ENCODE measurements at regions of chr16 and their contacts with region 1.

Region 1: DNA sequence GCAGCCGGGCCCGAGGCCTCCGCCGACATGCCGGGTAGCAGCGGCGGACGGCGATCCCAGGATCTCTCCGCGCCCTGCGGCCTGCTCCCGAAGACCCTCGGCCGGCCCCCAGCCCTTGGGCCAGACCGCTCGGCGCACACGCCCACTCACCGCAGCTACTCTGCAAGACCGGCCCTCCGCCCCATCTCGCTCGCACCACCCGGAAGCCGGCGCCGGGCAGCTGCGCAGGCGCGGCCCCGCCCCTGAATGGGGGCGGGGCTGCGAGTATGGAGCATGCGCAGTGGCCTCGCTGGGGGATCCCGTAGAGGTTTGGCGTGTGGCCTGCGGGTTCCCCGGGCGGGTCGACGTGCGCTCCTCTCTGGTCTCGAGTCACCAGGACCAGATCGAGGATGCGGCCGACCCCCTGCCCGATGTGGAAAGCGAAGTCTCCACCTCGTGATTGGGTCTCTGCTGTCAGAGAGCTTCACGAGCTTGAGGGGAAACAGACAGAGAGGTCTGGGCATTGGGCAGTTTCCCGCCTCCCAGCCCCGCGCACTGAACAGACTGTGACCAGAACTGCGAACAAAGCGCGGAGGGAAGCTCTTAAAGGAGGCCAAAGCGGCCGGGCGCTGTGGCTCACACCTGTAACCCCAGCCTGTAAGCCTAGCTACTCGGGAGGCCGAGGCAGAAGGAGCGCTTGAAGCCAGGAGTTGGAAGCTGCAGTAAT is at the start of gene KCTD13:
- DNase-seq: peak; percentile 88
- ATAC-seq: peak; percentile 94
- H3K4me3 Mint-ChIP-seq: peak within 1 kb of the TSS; percentile 85
- H3K27ac Mint-ChIP-seq: peak within 1 kb of the TSS; percentile 93
- H3K4me1 Mint-ChIP-seq: peaks cover 29% of the 10 kb centered on the region
- H3K27me3 Mint-ChIP-seq: peaks cover 2% of the 10 kb centered on the region
- total RNA-seq, gene KCTD13: 33.8 to 35.5 TPM

Region 2: GRCh38 chr16:29877266-29877961 is 48.7 kb before region 1 on chr16:
- CTCF ChIA-PET with region 1: no interaction called
- POLR2A ChIA-PET with region 1: no interaction called
- DNase-seq: peak; percentile 55
- ATAC-seq: peak; percentile 70
- H3K4me3 Mint-ChIP-seq: no peak overlapping the region
- H3K27ac Mint-ChIP-seq: no peak overlapping the region
- H3K4me1 Mint-ChIP-seq: peaks cover 16% of the 10 kb centered on the region
- H3K27me3 Mint-ChIP-seq: peaks cover 27% of the 10 kb centered on the region

Region 3: GRCh38 chr16:29907973-29908372 is 18.2 kb before region 1 on chr16:
- CTCF ChIA-PET with region 1: no interaction called
- POLR2A ChIA-PET with region 1: no interaction called
- DNase-seq: no peak
- ATAC-seq: no peak
- H3K4me3 Mint-ChIP-seq: no peak overlapping the region
- H3K27ac Mint-ChIP-seq: no peak overlapping the region
- H3K4me1 Mint-ChIP-seq: peaks cover 4% of the 10 kb centered on the region
- H3K27me3 Mint-ChIP-seq: peaks cover 2% of the 10 kb centered on the region

Region 4: GRCh38 chr16:29961479-29962343 is 35.6 kb after region 1 on chr16 and contains the start of gene TMEM219:
- CTCF ChIA-PET with region 1: interaction called, 16 read pairs
- POLR2A ChIA-PET with region 1: interaction called, 15 read pairs
- DNase-seq: peak; percentile 94
- ATAC-seq: peak; percentile 95
- H3K4me3 Mint-ChIP-seq: peak within 1 kb of the TSS; percentile 82
- H3K27ac Mint-ChIP-seq: peak within 1 kb of the TSS; percentile 84
- H3K4me1 Mint-ChIP-seq: peaks cover 20% of the 10 kb centered on the region
- H3K27me3 Mint-ChIP-seq: no peaks in the 10 kb centered on the region
- total RNA-seq, gene TMEM219: 57.8 to 61.0 TPM

Measured in activated CD8-positive, alpha-beta T cell treated with anti-CD3 and anti-CD28 coated beads, Interleukin-2, amount 10 ng/mL, durations not matched to agents 7 days and 5 days (primary cell).